ENCODE measurements at regions of chr12 and their contacts with region 1.

Region 1: DNA sequence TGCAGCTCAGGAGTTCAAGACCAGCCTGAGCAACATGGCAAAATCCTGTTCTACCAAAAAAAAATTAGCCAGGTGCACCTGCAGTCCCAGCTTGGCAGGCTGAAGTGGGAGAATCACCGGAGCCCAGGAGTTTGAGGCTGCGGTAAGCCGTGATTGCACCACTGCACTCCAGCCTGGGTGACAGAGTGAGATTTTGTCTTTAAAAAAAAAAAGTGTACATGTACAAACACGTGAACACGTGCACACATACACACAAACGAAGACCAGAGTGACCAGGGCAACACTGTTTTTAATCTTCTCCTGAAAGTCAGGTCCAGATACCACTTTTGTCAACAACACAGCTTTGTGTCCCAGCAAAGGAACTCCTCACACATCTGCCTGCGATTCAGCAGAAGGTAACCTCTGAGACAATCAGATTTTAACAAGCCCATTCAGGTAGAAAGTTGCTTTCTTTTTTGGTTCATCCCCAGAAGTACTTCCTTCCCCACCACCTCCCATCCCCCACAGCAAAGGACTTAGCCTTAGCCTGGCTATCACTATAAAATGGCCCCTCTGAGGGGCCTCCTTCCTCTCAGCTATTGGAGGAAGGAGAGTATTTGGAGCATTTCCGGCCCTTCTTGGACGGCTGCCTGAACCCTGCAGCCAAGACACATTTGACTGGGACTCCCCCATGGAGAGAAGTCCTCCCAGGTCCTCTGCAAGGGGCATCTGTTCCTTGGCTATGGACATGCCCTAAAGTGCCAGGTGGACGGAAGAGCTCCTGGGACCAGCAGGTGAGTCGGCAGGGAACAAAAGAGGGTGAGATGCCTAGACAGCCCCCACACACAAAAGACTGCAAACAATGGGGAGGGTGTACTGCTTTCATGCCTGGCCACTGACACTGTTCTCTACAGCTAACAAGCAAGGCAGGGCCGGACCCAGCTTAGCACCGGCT is 9.8 kb downstream of the CTDSP2 start:
- DNase-seq: peak; percentile 61
- H3K4me3 ChIP-seq: no peak overlapping the region
- H3K27ac ChIP-seq: peak overlapping the region; percentile 31
- H3K4me1 ChIP-seq: peaks cover 47% of the 10 kb centered on the region
- H3K27me3 ChIP-seq: no peaks in the 10 kb centered on the region
- CTCF ChIP-seq: no peak

Region 2: DNA sequence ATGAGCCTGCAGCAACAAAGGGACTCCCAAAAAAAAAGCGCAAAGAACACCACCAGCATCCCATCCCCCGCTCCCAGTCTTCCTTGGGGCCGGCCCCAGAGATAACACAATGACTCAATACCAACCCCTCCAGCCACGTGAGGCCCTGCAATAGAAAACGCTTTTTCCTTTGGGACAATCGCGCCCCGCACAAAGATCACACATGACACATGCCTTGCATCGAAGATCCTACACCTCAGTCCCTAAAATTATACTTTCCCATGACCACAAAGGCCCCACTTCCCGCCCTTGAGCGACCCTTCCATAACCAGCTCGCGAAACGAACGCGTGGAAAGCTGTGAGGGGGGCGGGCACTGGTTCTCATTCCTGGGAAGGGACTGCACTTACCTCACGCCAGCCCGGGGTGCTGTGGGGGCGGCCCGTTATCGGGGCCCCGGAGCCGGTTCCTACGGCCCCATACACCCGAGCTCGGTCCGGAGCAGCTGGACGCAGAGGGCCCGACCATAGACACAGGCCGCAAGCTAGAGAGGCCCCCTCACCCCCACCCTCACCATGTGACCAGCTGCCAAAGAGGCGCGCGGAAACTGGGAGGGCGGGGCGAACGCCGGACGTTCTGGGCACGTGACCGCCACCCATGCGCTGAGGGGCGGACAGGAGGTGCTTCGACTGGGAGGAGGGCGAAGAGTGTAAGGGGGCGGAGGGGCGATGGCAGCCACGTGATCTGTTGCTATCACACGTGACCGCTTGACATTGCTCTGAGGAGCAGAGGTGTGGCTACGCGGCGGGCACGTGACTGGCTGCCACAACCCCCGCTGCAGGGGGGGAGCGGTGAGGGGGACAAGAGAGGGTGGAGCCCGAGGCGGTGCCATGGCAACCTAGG is 84.7 kb before region 1 on chr12 and contains the start of gene CDK4:
- CTCF ChIA-PET with region 1: no interaction called
- dilution Hi-C with region 1: no loop called
- in situ Hi-C with region 1: no loop called
- intact Hi-C with region 1: loop called (anchors 1 kb)
- DNase-seq: peak; percentile 99
- H3K4me3 ChIP-seq: peak within 1 kb of the TSS; percentile 69 to 89 (median 71)
- H3K27ac ChIP-seq: peak within 1 kb of the TSS; percentile 81
- H3K4me1 ChIP-seq: peaks cover 35% of the 10 kb centered on the region
- H3K27me3 ChIP-seq: no peaks in the 10 kb centered on the region
- CTCF ChIP-seq: no peak
- total RNA-seq, gene CDK4: 103 to 163 TPM

Region 3: DNA sequence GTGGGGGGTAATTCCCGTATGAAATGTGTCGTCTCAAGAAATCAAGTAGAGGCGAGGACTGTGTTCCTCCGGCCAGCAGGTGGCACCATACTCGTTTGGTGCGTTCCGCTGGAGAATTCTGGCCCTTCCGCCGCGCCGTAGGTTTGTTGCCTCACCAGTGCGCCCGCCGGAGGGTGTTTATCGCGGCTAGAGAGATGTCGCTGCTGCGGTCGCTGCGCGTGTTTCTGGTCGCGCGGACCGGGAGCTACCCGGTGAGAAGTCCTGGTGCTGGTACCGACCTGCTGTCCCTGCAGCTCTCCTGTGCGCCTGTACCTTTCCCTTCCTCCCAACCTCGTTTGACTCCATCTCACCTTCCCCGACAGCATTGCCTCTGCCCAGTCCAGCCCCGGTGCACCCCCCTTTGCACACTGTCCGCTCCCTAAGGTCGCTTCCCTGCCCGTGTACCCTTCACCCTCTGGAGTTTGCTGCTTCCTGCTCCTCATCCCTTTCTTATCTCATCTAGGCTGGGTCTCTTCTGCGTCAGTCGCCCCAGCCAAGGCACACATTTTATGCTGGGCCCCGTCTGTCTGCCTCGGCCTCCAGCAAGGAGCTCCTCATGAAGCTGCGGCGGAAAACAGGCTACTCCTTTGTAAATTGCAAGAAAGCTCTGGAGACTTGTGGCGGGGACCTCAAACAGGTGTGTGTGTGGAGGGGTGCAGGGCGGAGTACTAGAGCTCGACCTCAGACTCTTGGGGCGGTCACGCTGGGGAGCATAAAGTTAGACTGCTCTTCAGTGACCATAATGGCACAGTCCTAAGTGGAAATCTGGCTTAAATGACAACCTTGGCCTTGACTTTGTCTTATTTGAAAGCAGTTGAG is 53.9 kb before region 1 on chr12 and contains the start of gene TSFM:
- CTCF ChIA-PET with region 1: no interaction called
- dilution Hi-C with region 1: no loop called
- in situ Hi-C with region 1: no loop called
- intact Hi-C with region 1: loop called (anchors 5 kb)
- DNase-seq: peak; percentile 86
- H3K4me3 ChIP-seq: peak within 1 kb of the TSS; percentile 90 to 98 (median 98)
- H3K27ac ChIP-seq: peak within 1 kb of the TSS; percentile 69
- H3K4me1 ChIP-seq: peaks cover 10% of the 10 kb centered on the region
- H3K27me3 ChIP-seq: no peaks in the 10 kb centered on the region
- CTCF ChIP-seq: peak; percentile 80 to 94
- total RNA-seq, gene TSFM: 11.8 to 27.0 TPM

Region 4: DNA sequence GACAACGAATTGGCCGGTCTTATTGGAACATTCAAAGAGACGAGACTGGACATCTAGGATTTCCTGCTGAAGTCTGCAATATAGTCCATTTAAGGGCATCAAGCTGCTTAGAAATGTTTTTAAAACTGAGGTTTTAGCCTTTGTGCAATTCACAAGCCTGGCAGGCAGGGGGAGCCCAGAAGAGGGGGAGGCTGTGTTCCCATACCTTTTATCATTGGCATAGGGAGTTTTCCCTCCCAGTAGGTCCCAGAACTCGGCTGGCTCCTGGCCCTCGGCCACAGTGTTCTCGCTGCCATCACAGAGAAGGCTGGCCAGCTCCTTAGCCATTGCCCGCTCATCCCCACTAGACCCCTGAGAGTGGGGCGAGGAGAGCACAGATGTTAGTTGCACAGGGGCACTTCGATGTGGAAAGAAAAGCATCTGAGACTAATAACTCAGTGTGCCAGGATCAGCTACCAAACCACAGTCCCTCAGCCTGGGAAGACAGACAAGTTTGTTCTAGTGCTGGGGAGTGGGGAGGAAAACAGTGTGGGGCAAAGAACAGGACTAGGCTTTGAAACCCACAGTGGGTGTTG is 33.3 kb before region 1 on chr12:
- CTCF ChIA-PET with region 1: no interaction called
- dilution Hi-C with region 1: no loop called
- in situ Hi-C with region 1: no loop called
- intact Hi-C with region 1: loop called (anchors 1 kb)
- DNase-seq: peak; percentile 42
- H3K4me3 ChIP-seq: no peak overlapping the region
- H3K27ac ChIP-seq: no peak overlapping the region
- H3K4me1 ChIP-seq: no peaks in the 10 kb centered on the region
- H3K27me3 ChIP-seq: no peaks in the 10 kb centered on the region
- CTCF ChIP-seq: peak; percentile 82 to 89

Region 5: DNA sequence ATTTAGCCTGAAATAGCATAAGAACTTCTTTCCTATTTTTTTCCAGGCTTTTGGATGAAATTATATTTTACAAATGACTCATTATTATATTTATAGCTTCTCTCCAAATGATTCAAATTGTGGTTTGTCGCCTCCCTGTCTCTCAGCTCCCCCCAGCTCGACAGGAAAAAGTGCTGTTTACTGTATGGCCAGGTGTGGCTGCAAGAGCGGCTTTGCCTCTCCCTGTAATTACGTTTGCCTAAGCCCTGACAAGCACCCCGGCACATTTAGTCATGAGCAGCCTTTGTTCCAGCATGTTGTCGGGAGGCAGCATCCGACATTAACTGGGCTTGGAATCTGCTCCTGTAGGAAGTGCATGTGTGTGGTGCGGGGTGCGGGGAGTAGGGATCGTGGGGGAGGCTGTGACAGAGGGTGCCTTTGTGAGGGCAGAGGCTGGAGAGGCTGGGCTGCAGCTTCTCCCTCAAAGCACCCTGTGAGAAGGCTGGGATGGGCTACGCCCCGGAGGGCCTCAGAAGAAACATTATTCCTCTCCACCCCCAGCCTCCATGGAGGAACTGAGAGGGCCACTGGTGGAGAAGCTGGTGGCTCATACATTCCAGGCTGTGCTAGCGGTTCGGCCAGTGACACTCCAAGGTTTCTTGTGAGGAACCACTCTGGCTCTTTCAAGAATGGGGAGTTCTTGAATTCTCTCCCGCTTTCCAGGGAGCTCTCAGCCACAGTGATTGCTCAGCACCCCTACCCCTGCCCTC is 51.9 kb after region 1 on chr12:
- CTCF ChIA-PET with region 1: no interaction called
- dilution Hi-C with region 1: no loop called
- in situ Hi-C with region 1: no loop called
- intact Hi-C with region 1: loop called (anchors 1 kb)
- DNase-seq: peak; percentile 98
- H3K4me3 ChIP-seq: peak overlapping the region in 2 of 3 experiments; percentile 11 to 28
- H3K27ac ChIP-seq: peak overlapping the region; percentile 71
- H3K4me1 ChIP-seq: peaks cover 38% of the 10 kb centered on the region
- H3K27me3 ChIP-seq: no peaks in the 10 kb centered on the region
- CTCF ChIP-seq: no peak